Body of pancreas (tissue), 4 donors: ENCODE measurements at regions of chrX and their contacts with region 1.

Region 1: GRCh38 chrX:70096052-70096451 is 33.8 kb downstream of the OTUD6A start:
- DNase-seq: peak in 1 of 4 donors; percentile 1
- ATAC-seq: no peak
- H3K4me3 ChIP-seq: no peak overlapping the region
- H3K27ac ChIP-seq: no peak overlapping the region
- H3K4me1 ChIP-seq: no peaks in the 10 kb centered on the region
- H3K27me3 ChIP-seq: no peaks in the 10 kb centered on the region
- CTCF ChIP-seq: no peak
- POLR2A ChIP-seq: no peak

Region 2: GRCh38 chrX:69493193-69493592 is 602.9 kb before region 1 on chrX:
- intact Hi-C with region 1: loop called (anchors 10 kb)
- DNase-seq: peak; percentile 43 to 65 (median 52)
- ATAC-seq: no peak
- H3K4me3 ChIP-seq: no peak overlapping the region
- H3K27ac ChIP-seq: no peak overlapping the region
- H3K4me1 ChIP-seq: no peaks in the 10 kb centered on the region
- H3K27me3 ChIP-seq: no peaks in the 10 kb centered on the region
- CTCF ChIP-seq: peak; percentile 14 to 68 (median 50)
- POLR2A ChIP-seq: no peak

Region 3: GRCh38 chrX:69919749-69920148 is 176.3 kb before region 1 on chrX:
- intact Hi-C with region 1: no loop called
- DNase-seq: no peak
- ATAC-seq: no peak
- H3K4me3 ChIP-seq: no peak overlapping the region
- H3K27ac ChIP-seq: no peak overlapping the region
- H3K4me1 ChIP-seq: no peaks in the 10 kb centered on the region
- H3K27me3 ChIP-seq: no peaks in the 10 kb centered on the region
- CTCF ChIP-seq: no peak
- POLR2A ChIP-seq: no peak

Region 4: DNA sequence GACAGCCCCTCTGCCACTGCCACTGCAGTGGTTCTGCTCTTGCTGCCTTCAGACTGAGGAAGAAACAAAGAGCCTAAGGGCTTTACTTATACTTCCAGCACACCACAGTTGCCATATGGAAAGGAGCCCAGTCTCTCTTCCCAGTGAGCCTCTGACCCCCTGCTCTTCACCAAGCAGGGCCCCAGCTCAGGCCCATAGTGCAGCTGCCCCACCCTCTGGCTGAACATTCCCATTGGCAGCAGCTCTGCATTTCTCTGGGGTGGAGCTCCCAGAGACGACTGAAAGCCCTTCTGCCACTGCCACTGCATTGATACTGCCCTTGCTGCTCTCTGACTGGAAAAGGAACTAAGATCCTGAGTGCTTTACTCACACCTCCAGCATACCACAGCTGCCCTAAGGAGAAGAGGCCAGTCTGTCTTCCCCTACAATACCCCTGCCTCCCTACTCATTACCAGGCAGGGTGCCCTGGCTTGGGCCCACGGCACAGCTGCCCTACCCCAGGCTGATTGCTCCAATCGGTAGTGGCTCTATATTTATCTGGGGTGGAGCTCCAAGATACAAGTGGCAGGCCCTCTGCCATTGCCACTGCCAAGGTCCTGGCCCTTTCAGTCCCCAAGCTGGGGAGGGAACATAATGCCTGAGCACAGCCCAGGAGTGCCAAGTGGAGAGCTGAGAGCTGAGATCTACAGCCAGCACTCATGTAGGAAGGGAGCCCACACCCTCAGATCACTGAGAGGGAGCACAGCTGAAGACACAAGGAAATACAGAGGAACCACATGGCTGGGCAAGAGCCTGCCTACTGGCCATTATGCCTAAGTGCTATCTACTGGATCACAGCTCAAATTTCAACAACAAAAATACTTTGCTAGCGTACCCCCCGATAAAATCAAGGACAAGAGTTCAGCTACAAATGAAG is 82.3 kb before region 1 on chrX:
- intact Hi-C with region 1: no loop called
- DNase-seq: peak; percentile 15 to 67 (median 39)
- ATAC-seq: peak; percentile 58
- H3K4me3 ChIP-seq: no peak overlapping the region
- H3K27ac ChIP-seq: peak overlapping the region in 2 of 4 donors; percentile 21 to 44
- H3K4me1 ChIP-seq: no peaks in the 10 kb centered on the region
- H3K27me3 ChIP-seq: no peaks in the 10 kb centered on the region
- CTCF ChIP-seq: no peak
- POLR2A ChIP-seq: no peak